ENCODE measurements at regions of chr1 and their contacts with region 1.

Region 1: DNA sequence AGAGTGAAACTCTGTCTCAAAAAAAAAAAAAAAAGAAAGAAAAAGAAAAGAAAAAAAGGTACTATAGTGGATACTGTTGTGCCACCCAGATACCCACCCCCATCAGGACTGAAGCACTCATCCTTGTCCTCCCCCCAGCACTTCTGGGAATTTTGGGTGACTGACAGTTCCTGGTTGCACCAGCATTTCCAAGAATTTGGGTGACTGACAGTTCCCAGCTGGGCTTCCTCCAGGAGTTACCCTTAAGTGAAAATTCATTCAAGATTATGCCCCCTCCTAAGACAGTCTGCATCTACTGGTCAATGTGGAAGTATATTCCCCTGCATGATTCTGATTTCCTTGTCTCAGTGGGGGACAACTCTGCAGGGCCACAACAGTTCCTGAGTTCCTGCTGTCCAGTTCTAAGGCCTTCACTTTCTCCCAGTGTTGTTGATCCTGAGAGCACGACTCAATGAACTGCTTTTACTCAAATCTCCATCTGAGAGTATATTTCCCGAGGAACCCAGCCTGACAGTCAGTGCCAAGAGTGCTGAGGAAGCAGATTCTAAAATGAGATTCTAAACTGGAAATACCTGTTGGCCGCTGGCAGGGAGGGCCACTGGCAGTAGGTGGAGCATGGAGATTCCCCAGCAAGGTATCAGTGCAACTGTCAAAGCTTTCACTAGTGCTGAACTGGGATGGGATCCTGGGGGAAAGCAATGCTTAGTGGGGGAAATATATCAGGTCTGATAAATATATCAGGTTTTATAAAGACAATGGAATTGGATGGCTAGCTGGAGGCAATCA is 18.5 kb downstream of the RIIAD1 start:
- DNase-seq: no peak
- ATAC-seq: no peak
- H3K4me3 Mint-ChIP-seq: no peak overlapping the region
- H3K27ac Mint-ChIP-seq: no peak overlapping the region
- H3K4me1 Mint-ChIP-seq: no peaks in the 10 kb centered on the region
- H3K27me3 Mint-ChIP-seq: peaks cover 1% of the 10 kb centered on the region

Region 2: DNA sequence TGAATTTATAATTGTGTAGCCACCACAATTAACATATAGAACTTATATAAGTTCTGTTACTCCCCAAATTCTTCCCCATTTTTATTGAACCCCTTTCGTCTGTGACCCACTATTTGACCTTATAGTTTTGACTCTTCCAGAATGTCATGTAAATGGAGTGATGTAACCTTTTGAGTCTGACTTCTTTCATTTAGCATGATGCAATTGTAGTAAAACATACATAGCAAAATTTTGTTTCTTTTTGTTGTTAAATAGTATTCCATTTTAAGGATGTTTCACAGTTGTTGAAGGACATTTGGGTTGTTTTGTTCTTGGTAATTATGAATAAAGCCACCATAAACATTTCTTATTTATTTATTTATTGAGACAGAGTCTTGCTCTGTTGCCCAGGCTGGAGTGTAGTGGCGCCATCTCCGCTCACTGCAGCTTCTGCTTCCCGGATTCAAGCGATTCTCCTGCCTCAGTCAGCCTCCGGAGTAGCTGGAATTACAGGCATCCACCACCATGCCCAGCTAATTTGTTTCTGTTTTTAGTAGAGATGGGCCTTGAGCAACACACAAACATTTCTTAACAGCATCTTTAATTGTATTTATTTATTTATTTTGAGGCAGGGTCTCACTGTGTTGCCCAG is 1342.3 kb before region 1 on chr1:
- CTCF ChIA-PET with region 1: no interaction called
- POLR2A ChIA-PET with region 1: no interaction called
- intact Hi-C with region 1: no loop called
- DNase-seq: no peak
- ATAC-seq: no peak
- H3K4me3 Mint-ChIP-seq: no peak overlapping the region
- H3K27ac Mint-ChIP-seq: peak overlapping the region; percentile 65
- H3K4me1 Mint-ChIP-seq: peaks cover 23% of the 10 kb centered on the region
- H3K27me3 Mint-ChIP-seq: no peaks in the 10 kb centered on the region

Region 3: DNA sequence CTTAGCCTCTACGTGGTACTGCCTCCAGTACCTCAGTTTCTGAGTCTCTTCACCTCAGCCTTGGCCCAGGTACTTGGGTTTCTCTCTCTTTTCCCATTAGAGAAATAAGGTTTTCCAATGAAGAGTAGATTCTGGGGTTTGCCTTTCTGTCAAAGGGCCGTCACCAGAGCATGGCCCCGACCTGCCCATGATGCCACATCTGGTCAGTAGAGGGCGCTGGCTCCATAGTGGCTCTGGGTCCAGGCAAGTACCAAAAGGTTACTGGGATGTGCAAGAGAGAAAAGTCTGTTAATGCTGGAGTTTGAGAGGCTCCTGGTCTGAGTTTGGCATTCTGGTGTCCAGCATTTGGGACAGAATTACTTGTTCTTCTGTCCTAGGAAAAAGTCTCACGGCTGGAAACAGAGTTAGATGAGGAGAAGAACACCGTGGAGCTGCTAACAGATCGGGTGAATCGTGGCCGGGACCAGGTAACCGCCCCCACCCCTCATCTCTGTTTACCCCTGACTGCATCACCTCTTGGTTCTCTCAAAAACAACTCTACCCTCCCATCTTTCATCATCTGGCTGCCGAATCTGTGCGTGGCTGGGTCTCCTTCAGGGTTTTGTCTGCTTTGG is 205.0 kb before region 1 on chr1:
- CTCF ChIA-PET with region 1: interaction called, 3 read pairs
- POLR2A ChIA-PET with region 1: no interaction called
- intact Hi-C with region 1: loop called (anchors 1 to 5 kb)
- DNase-seq: peak; percentile 91
- ATAC-seq: peak; percentile 87
- H3K4me3 Mint-ChIP-seq: no peak overlapping the region
- H3K27ac Mint-ChIP-seq: no peak overlapping the region
- H3K4me1 Mint-ChIP-seq: peaks cover 5% of the 10 kb centered on the region
- H3K27me3 Mint-ChIP-seq: no peaks in the 10 kb centered on the region

Region 4: DNA sequence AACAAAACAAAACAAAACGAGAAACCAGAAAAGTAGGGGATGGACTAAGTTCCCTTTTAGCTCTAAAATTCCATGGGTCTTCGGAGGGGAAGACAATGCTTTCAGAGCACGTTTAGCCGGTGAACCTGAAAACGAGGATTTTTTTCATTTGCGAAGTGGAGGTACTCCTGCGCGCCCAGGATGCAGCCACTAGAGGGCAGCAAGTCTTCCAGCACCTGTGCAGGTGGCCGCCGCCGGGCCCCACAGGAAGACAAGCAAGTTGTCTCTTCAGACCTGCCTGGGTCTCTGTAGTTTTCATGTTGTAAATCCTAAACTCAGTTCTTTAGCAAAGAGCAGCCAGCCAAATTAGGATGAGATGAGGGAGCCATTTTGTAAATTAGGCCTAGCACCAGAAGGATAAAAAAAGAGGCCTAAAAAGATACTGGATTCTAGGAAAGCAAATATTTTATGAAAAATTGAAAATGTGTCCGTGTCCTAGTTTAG is 145.6 kb before region 1 on chr1:
- CTCF ChIA-PET with region 1: interaction called, 10 read pairs
- POLR2A ChIA-PET with region 1: no interaction called
- intact Hi-C with region 1: loop called (anchors 1 kb)
- DNase-seq: peak; percentile 94
- ATAC-seq: peak; percentile 100
- H3K4me3 Mint-ChIP-seq: peak overlapping the region; percentile 53
- H3K27ac Mint-ChIP-seq: peak overlapping the region; percentile 29
- H3K4me1 Mint-ChIP-seq: peaks cover 9% of the 10 kb centered on the region
- H3K27me3 Mint-ChIP-seq: peaks cover 5% of the 10 kb centered on the region

Region 5: DNA sequence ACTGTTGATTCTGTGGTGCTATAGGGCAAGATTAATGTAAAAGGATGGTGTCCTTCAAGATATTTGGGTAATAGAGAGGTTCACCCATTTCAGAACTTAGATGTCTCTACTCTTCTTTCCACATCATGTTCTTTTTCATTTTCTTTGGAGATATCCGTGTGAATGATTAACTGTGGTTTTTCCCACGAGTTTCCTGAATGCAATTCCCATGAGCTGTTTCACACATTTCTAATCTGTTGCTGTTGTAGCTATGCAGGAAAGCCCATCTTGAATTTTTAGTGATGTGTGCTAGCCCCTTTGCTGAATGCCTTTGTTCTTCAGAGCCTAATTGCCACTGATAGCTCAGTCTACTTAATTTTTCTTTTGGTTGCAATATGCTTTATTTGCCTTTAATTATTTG is 100.3 kb before region 1 on chr1:
- CTCF ChIA-PET with region 1: no interaction called
- POLR2A ChIA-PET with region 1: no interaction called
- intact Hi-C with region 1: no loop called
- DNase-seq: no peak
- ATAC-seq: no peak
- H3K4me3 Mint-ChIP-seq: no peak overlapping the region
- H3K27ac Mint-ChIP-seq: no peak overlapping the region
- H3K4me1 Mint-ChIP-seq: peaks cover 12% of the 10 kb centered on the region
- H3K27me3 Mint-ChIP-seq: no peaks in the 10 kb centered on the region

Region 6: GRCh38 chr1:151673407-151673806 is 66.4 kb before region 1 on chr1:
- CTCF ChIA-PET with region 1: no interaction called
- POLR2A ChIA-PET with region 1: no interaction called
- intact Hi-C with region 1: no loop called
- DNase-seq: no peak
- ATAC-seq: no peak
- H3K4me3 Mint-ChIP-seq: no peak overlapping the region
- H3K27ac Mint-ChIP-seq: no peak overlapping the region
- H3K4me1 Mint-ChIP-seq: peaks cover 2% of the 10 kb centered on the region
- H3K27me3 Mint-ChIP-seq: no peaks in the 10 kb centered on the region